ENCODE measurements at regions of chr3 and their contacts with region 1.

Region 1: DNA sequence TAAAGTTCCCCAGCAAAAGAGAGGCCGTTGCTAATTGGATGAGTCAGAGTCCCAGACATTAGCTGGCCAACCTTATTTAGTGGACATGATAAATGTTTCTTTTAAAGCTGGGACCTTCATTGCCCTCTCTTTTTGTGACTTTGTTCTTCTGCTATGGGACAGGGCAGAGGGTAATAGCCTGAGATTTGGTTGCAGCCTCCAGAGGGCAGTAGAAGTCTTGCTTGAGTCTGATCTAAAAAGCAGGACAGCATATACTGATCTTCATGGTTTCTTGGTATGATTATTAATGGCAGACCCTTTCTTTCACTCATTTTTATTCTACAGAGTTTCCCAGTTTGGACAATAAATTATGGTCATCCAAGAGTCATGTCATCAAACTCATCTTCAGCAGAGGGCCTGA is 25.1 kb upstream of the ZKSCAN7 start:
- DNase-seq: no peak
- H3K4me3 ChIP-seq: no peak overlapping the region
- H3K4me3 Mint-ChIP-seq: no peak overlapping the region
- H3K27ac ChIP-seq: no peak overlapping the region
- H3K27ac Mint-ChIP-seq: no peak overlapping the region
- H3K4me1 ChIP-seq: no peaks in the 10 kb centered on the region
- H3K4me1 Mint-ChIP-seq: no peaks in the 10 kb centered on the region
- H3K27me3 ChIP-seq: no peaks in the 10 kb centered on the region
- H3K27me3 Mint-ChIP-seq: peaks cover 0 to 5% (median 3%) of the 10 kb centered on the region in 3 donors
- CTCF ChIP-seq: peak; percentile 28

Region 2: DNA sequence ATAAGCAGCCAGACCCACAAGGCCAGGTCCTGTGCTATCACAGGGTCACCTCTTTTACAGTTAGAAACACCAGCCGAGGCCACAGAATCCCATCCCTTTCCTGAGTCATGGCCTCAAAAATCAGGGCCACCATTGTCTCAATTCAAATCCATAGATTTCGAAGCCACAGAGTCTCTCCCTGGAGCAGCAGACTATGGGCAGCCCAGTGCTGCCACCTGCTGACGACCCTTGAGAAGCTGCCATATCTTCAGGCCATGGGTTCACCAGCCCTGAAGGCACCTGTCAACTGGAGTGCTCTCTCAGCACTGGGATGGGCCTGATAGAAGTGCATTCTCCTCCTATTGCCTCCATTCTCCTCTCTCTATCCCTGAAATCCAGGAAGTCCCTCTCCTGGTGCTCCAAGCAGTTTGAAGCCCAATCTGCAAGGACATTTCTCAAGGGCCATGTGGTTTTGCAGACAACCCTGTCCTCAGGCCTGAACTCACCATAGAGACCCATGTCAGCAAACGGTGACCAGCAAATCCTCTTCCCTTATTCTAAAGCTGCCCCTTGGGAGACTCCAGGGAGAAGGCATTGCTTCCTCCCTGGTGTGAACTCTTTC is 384.0 kb after region 1 on chr3:
- intact Hi-C with region 1: loop called (anchors 5 kb)
- DNase-seq: peak; percentile 35 to 67 (median 57)
- H3K4me3 ChIP-seq: no peak overlapping the region
- H3K4me3 Mint-ChIP-seq: no peak overlapping the region
- H3K27ac ChIP-seq: no peak overlapping the region
- H3K27ac Mint-ChIP-seq: no peak overlapping the region
- H3K4me1 ChIP-seq: no peaks in the 10 kb centered on the region
- H3K4me1 Mint-ChIP-seq: no peaks in the 10 kb centered on the region
- H3K27me3 ChIP-seq: peaks cover 4 to 7% of the 10 kb centered on the region in 2 donors
- H3K27me3 Mint-ChIP-seq: peaks cover 11 to 18% (median 15%) of the 10 kb centered on the region in 3 donors
- CTCF ChIP-seq: peak; percentile 82

Measured in CD14-positive monocyte (primary cell).